ENCODE measurements at regions of chr17 and their contacts with region 1.

Region 1: GRCh38 chr17:21500064-21500463 is 123.9 kb downstream of the KCNJ12 start:
- DNase-seq: no peak
- H3K4me3 ChIP-seq: no peak overlapping the region
- H3K27ac ChIP-seq: no peak overlapping the region
- H3K4me1 ChIP-seq: no peaks in the 10 kb centered on the region
- H3K27me3 ChIP-seq: no peaks in the 10 kb centered on the region
- CTCF ChIP-seq: no peak

Region 2: GRCh38 chr17:21482189-21482865 is 17.7 kb before region 1 on chr17:
- CTCF ChIA-PET with region 1: no interaction called
- dilution Hi-C with region 1: no loop called
- in situ Hi-C with region 1: no loop called
- intact Hi-C with region 1: loop called (anchors 2 kb)
- DNase-seq: no peak
- H3K4me3 ChIP-seq: no peak overlapping the region
- H3K27ac ChIP-seq: no peak overlapping the region
- H3K4me1 ChIP-seq: no peaks in the 10 kb centered on the region
- H3K27me3 ChIP-seq: peaks cover 9% of the 10 kb centered on the region
- CTCF ChIP-seq: no peak

Measured in mammary epithelial cell (primary cell).